Activated T-helper 2 cell treated with anti-CD3 and anti-CD28 coated beads, Interferon-gamma antibody, Interleukin-2, Interleukin-4, amounts not matched to agents 10 μg/mL and 5 μg/mL and 100 μg/mL, durations not matched to agents 14 hours and 24 hours and 36 hours (primary cell): ENCODE measurements at regions of chr5 and their contacts with region 1.

Region 1: GRCh38 chr5:150350524-150351344 is 6.8 kb upstream of the TCOF1 start:
- DNase-seq: peak; percentile 31
- H3K4me3 Mint-ChIP-seq: no peak overlapping the region
- H3K27ac Mint-ChIP-seq: peak overlapping the region; percentile 25
- H3K4me1 Mint-ChIP-seq: peaks cover 11% of the 10 kb centered on the region
- H3K27me3 Mint-ChIP-seq: peaks cover 7% of the 10 kb centered on the region

Region 2: GRCh38 chr5:150161242-150162141 is 189.2 kb before region 1 on chr5:
- intact Hi-C with region 1: loop called (anchors 1 kb)
- DNase-seq: peak; percentile 60
- H3K4me3 Mint-ChIP-seq: no peak overlapping the region
- H3K27ac Mint-ChIP-seq: no peak overlapping the region
- H3K4me1 Mint-ChIP-seq: no peaks in the 10 kb centered on the region
- H3K27me3 Mint-ChIP-seq: peaks cover 21% of the 10 kb centered on the region

Region 3: DNA sequence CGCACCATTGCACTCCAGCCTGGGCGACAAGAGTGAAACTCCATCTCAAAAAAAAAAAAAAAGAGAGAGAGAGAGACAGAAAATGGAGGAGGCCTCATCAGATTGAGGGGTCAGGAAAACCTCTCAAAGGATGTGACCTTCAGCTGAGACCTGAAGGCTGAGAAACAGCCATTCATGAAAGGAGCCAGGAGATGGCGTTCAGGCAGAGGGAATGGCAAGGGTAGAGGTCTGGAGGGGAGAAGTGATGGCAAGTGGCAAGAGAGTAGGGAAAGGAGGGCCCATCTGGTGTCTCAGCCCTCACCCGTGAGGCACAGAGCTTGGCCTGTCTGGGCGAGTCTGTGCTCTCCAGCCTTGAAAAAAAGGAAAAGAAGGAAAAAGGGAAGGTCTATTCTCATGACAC is 78.2 kb before region 1 on chr5:
- intact Hi-C with region 1: loop called (anchors 2 kb)
- DNase-seq: no peak
- H3K4me3 Mint-ChIP-seq: no peak overlapping the region
- H3K27ac Mint-ChIP-seq: no peak overlapping the region
- H3K4me1 Mint-ChIP-seq: no peaks in the 10 kb centered on the region
- H3K27me3 Mint-ChIP-seq: peaks cover 2% of the 10 kb centered on the region